ENCODE measurements at regions of chr5 and their contacts with region 1.

Region 1: DNA sequence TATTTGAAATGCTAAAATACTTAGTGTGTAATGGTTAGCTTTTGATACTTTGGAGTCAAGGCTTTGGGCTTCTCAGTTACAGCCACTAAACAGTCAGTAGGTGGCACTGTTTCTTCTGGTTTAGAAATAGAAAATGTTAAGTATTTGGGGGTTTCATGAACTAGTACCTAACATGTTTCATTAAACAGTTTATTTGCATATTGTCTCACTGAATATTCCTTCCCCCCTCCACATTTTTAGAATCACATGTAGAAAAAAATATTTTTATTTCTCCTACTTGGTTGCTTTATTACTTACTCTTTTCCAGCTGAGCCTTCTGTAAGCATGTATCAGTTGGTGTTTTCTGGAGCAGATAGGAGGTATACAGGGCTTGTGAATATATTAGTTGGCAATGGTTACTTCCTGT is 48.0 kb downstream of the IPO11 start:
- DNase-seq: no peak
- H3K4me3 ChIP-seq: no peak overlapping the region
- H3K27ac ChIP-seq: peak overlapping the region in 1 of 2 donors; percentile 9
- H3K4me1 ChIP-seq: peaks cover 4% of the 10 kb centered on the region
- H3K27me3 ChIP-seq: no peaks in the 10 kb centered on the region
- CTCF ChIP-seq: peak; percentile 48 to 72 (median 65)
- EP300 ChIP-seq: no peak
- POLR2A ChIP-seq: no peak

Region 2: GRCh38 chr5:62779010-62779422 is 318.4 kb after region 1 on chr5:
- intact Hi-C with region 1: loop called in 1 of 4 experiments (anchors 10 kb)
- DNase-seq: no peak
- H3K4me3 ChIP-seq: no peak overlapping the region
- H3K27ac ChIP-seq: no peak overlapping the region
- H3K4me1 ChIP-seq: no peaks in the 10 kb centered on the region
- H3K27me3 ChIP-seq: no peaks in the 10 kb centered on the region
- CTCF ChIP-seq: peak; percentile 15 to 43 (median 38)
- EP300 ChIP-seq: no peak
- POLR2A ChIP-seq: no peak

Measured in ovary (tissue), 10 donors.